ENCODE measurements at regions of chr3 and their contacts with region 1.

Region 1: GRCh38 chr3:58824285-58824684 is 157.7 kb upstream of the FAM3D start:
- DNase-seq: no peak
- ATAC-seq: peak; percentile 66
- H3K4me3 ChIP-seq: no peak overlapping the region
- H3K27ac ChIP-seq: no peak overlapping the region
- H3K4me1 ChIP-seq: no peaks in the 10 kb centered on the region
- H3K27me3 ChIP-seq: no peaks in the 10 kb centered on the region
- CTCF ChIP-seq: peak; percentile 46 to 67 (median 51)
- EP300 ChIP-seq: no peak
- POLR2A ChIP-seq: no peak
- RAD21 ChIP-seq: peak; percentile 80

Region 2: DNA sequence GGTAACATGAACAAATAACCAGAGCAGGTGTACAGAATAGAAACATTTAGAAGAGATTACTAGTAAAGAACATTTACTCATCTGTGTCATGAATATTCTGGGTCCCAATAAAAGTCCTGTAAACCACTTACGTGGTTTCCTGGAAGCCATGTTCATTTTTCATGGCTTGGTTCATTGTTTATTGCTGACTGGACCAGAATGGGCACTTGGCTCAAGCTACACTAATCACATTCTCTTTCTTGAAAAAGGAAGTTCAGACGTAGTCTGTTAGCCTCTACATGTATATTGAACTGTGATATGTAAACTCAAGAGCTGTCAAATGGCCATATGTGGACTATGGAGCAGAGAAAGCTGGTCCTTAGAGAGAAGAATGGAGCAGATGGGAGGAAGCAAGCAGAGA is 19.4 kb before region 1 on chr3:
- CTCF ChIA-PET with region 1: interaction called, 14 read pairs
- POLR2A ChIA-PET with region 1: no interaction called
- RAD21 ChIA-PET with region 1: no interaction called
- SMC1A ChIA-PET with region 1: interaction called, 8 read pairs
- in situ Hi-C with region 1: no loop called
- intact Hi-C with region 1: no loop called
- DNase-seq: no peak
- ATAC-seq: no peak
- H3K4me3 ChIP-seq: no peak overlapping the region
- H3K27ac ChIP-seq: no peak overlapping the region
- H3K4me1 ChIP-seq: no peaks in the 10 kb centered on the region
- H3K27me3 ChIP-seq: no peaks in the 10 kb centered on the region
- CTCF ChIP-seq: no peak
- EP300 ChIP-seq: no peak
- POLR2A ChIP-seq: no peak
- RAD21 ChIP-seq: no peak

Region 3: DNA sequence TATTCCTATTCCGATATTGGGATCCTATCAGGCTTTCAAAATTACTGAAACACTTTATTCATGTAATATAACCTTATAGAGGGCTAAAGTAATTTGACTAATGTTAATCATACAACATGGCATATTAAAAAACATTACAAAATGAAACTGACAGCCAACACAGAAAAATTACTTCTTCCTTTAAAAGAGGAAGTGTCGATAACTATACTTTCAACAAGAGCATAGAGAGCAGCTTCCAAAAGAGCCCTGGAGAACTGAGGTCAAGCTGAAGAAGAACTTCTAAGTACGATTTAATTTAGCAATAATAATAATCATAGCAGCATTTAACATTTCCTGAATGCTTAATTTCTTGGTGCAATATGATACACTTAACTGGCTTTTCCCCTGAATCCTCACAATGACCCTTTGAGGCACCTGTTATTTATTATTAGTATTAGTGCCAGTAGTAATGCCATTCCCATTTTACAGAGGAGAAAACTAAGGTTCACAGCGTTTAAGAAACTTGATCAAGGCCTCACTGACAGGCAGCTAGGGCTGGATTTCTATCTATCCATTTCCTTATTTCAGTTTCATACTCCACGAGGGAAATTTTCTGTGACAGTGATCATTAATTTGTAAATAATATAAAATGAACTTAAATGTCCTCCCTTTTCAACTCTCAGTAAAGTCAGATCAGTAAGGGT is 44.0 kb after region 1 on chr3:
- CTCF ChIA-PET with region 1: interaction called, 12 read pairs
- POLR2A ChIA-PET with region 1: no interaction called
- RAD21 ChIA-PET with region 1: interaction called, 15 read pairs
- SMC1A ChIA-PET with region 1: interaction called, 5 read pairs
- in situ Hi-C with region 1: no loop called
- intact Hi-C with region 1: no loop called
- DNase-seq: no peak
- ATAC-seq: peak; percentile 81
- H3K4me3 ChIP-seq: no peak overlapping the region
- H3K27ac ChIP-seq: no peak overlapping the region
- H3K4me1 ChIP-seq: no peaks in the 10 kb centered on the region
- H3K27me3 ChIP-seq: no peaks in the 10 kb centered on the region
- CTCF ChIP-seq: no peak
- EP300 ChIP-seq: no peak
- POLR2A ChIP-seq: no peak
- RAD21 ChIP-seq: no peak

Region 4: GRCh38 chr3:58899159-58899952 is 75.1 kb after region 1 on chr3:
- CTCF ChIA-PET with region 1: interaction called, 11 read pairs
- POLR2A ChIA-PET with region 1: no interaction called
- RAD21 ChIA-PET with region 1: interaction called, 4 read pairs
- SMC1A ChIA-PET with region 1: interaction called, 5 read pairs
- in situ Hi-C with region 1: no loop called
- intact Hi-C with region 1: no loop called
- DNase-seq: peak; percentile 63
- ATAC-seq: peak; percentile 95
- H3K4me3 ChIP-seq: no peak overlapping the region
- H3K27ac ChIP-seq: no peak overlapping the region
- H3K4me1 ChIP-seq: peaks cover 8% of the 10 kb centered on the region; the same call in 1 of the 2 replicates
- H3K27me3 ChIP-seq: no peaks in the 10 kb centered on the region
- CTCF ChIP-seq: no peak
- EP300 ChIP-seq: peak; percentile 23 to 52; a peak in 2 of 4 replicates
- POLR2A ChIP-seq: no peak
- RAD21 ChIP-seq: no peak

Region 5: DNA sequence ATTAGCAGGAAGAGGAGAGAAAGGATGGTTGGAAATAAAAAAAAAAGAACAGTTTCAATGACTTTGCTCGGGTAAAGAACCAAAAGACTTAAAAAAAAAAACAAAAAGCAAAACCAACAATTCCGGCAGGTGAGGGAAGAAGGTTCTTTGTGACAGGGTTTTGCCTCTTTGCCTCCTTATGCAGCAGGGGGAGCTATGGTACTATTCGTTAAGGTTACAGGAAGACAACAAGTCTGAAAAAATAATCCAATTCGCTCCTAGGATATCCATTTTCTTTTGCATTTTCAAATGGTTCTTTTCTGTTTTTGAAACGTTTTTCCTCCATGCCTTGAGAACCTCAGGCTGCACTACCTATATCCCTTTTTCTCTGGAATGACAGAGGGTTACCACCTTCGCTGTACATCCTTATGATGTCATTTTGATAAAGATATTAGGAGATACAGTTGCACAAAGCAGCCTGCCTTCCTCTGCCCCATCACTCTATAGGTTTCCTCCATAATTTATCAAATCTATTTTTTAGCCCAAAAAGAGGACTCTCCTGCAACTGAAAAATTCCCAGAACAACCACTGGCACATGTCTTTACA is 170.6 kb after region 1 on chr3:
- CTCF ChIA-PET with region 1: interaction called, 21 read pairs
- POLR2A ChIA-PET with region 1: no interaction called
- RAD21 ChIA-PET with region 1: interaction called, 29 read pairs
- SMC1A ChIA-PET with region 1: interaction called, 21 read pairs
- in situ Hi-C with region 1: no loop called
- intact Hi-C with region 1: loop called (anchors 2 kb)
- DNase-seq: peak; percentile 23
- ATAC-seq: peak; percentile 86
- H3K4me3 ChIP-seq: no peak overlapping the region
- H3K27ac ChIP-seq: no peak overlapping the region
- H3K4me1 ChIP-seq: no peaks in the 10 kb centered on the region
- H3K27me3 ChIP-seq: no peaks in the 10 kb centered on the region
- CTCF ChIP-seq: peak; percentile 65 to 75 (median 72)
- EP300 ChIP-seq: no peak
- POLR2A ChIP-seq: no peak
- RAD21 ChIP-seq: peak; percentile 73

Region 6: GRCh38 chr3:59064276-59064675 is 240.0 kb after region 1 on chr3:
- CTCF ChIA-PET with region 1: interaction called, 13 read pairs
- POLR2A ChIA-PET with region 1: no interaction called
- RAD21 ChIA-PET with region 1: no interaction called
- SMC1A ChIA-PET with region 1: no interaction called
- in situ Hi-C with region 1: loop called (anchors 10 kb)
- intact Hi-C with region 1: no loop called
- DNase-seq: no peak
- ATAC-seq: peak; percentile 58
- H3K4me3 ChIP-seq: no peak overlapping the region
- H3K27ac ChIP-seq: no peak overlapping the region
- H3K4me1 ChIP-seq: no peaks in the 10 kb centered on the region; the same call in 1 of the 2 replicates
- H3K27me3 ChIP-seq: no peaks in the 10 kb centered on the region
- CTCF ChIP-seq: peak in 2 of 3 experiments; percentile 7 to 18; a peak in 1 of 6 replicates
- EP300 ChIP-seq: no peak
- POLR2A ChIP-seq: no peak
- RAD21 ChIP-seq: no peak

Measured in GM12878 (cell line).